Activated T-helper 1 cell treated with anti-CD3 and anti-CD28 coated beads, Interleukin-12 subunit alpha, Interleukin-12 subunit beta, Interleukin-2, Interleukin-4 antibody, amounts not matched to agents 30 ng/mL and 10 ng/mL and 1 ng/mL, durations not matched to agents 14 hours and 24 hours and 36 hours (primary cell): ENCODE measurements at regions of chr4 and their contacts with region 1.

Region 1: DNA sequence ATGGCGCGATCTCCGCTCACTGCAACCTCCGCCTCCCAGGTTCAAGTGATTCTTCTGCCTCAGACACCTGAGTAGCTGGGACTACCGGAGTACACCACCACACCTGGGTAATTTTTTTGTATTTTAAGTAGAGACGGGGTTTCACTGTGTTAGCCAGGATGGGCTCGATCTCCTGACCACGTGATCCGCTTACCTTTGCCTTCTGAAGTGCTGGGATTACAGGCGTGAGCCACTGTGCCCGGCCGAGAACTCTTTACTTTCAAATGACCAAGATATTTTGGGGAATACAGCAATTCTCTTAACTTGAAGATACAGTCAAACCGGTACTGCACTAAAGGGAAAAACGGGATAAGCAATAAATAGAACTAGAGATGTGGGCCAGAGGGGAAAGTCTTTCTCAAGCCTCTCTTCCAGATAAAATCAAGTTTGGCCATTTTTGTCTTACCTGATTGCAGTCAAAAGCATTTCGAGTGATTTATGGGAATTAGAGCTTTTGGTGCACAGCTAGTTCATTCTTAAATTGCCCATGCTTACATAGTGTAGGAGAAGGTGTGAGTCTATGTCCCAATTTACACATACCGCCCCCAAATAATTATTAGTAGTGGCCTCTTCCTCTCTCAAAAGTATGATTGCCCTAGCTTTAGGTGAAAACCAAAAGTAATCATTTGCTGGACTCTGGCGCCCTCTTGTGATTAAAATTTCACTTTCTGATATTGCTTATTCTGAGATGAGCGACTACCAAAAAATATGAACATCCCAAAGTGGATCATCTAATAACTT is 53.2 kb upstream of the ABCG2 start:
- DNase-seq: peak; percentile 34
- H3K4me3 Mint-ChIP-seq: no peak overlapping the region
- H3K27ac Mint-ChIP-seq: no peak overlapping the region
- H3K4me1 Mint-ChIP-seq: no peaks in the 10 kb centered on the region
- H3K27me3 Mint-ChIP-seq: peaks cover 9% of the 10 kb centered on the region

Region 2: GRCh38 chr4:87375719-87376291 is 835.9 kb before region 1 on chr4:
- intact Hi-C with region 1: loop called (anchors 5 kb)
- DNase-seq: no peak
- H3K4me3 Mint-ChIP-seq: no peak overlapping the region
- H3K27ac Mint-ChIP-seq: no peak overlapping the region
- H3K4me1 Mint-ChIP-seq: no peaks in the 10 kb centered on the region
- H3K27me3 Mint-ChIP-seq: no peaks in the 10 kb centered on the region

Region 3: DNA sequence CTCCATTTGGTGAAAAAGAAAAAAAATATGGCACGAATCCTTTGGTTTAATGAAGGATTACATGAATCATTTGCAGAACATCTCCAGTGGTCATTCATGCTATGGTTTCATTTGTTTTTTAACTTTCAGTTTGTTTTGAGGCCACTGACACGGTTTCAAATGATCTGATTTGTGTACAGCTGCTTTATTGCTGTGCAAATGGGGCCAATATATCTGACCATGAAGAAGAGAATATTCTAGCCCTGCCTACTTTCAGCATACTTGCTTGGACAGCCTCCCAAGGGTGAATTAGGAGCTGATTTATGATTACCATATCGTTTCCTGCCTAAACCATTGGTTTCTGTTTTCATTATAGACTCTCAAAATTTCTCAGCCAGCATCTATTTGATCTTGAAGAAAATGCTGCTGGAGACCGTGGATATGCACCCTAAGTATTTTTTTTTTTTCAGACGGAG is 713.2 kb before region 1 on chr4:
- intact Hi-C with region 1: loop called (anchors 5 kb)
- DNase-seq: no peak
- H3K4me3 Mint-ChIP-seq: no peak overlapping the region
- H3K27ac Mint-ChIP-seq: no peak overlapping the region
- H3K4me1 Mint-ChIP-seq: peaks cover 5% of the 10 kb centered on the region
- H3K27me3 Mint-ChIP-seq: no peaks in the 10 kb centered on the region

Region 4: DNA sequence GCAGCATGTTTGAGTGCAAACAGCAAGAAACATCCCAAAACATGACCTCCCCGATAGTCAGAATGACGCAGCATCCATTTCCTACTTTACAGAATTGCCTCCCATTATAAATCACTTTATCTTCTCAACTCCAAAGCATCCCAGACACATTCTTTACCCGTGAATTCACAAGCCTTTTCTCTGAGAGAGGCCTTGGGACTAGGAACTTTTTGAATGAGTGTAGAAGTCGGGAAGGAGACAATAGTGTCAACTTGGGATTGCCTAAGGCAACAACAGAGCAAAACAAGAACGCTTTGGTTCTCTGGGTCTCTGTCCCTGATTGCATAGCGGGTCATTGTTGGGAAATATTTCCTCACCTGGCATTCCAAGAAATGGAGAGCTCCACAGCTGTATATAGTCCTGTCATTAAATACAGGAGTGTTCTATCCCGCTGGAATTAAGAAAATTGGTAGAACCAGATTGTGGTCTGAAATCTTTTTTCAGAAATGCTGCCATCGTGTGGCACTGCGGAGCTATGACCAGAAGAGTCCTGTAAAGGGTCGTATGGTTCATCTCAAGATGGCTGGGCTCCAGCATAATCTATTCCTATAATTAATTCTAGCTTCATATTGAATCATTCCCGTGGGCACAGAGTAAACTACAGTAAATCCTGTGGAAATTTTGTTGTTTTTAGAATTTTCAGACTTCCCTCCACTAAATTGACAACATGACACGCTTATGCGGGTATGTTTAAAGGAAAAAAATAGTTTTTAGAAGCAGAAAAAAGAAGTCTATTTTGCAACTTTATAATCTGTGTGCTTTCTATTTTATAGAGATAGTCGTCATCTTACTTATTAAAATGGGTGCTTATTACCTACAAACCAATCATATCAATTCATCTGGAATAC is 238.1 kb before region 1 on chr4:
- intact Hi-C with region 1: loop called (anchors 5 kb)
- DNase-seq: no peak
- H3K4me3 Mint-ChIP-seq: no peak overlapping the region
- H3K27ac Mint-ChIP-seq: no peak overlapping the region
- H3K4me1 Mint-ChIP-seq: peaks cover 15% of the 10 kb centered on the region
- H3K27me3 Mint-ChIP-seq: peaks cover 53% of the 10 kb centered on the region

Region 5: DNA sequence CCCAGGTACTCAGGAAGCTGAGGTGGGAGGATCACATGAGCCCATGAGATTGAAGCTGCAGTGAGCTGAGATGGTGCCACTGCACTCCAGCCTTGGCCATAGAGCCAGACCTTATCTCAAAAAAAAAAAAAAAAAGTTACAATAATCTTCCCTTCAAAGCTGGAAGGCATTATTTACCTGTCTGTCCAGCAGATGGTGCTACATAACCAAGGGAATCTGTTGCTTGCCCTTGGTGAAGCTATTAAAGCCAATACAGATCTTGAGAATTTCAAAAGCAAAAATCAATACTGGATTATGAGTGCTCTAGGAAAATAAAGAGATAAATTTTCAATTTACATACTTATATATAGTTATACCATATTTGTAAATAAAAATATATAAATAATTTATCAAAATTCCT is 178.4 kb before region 1 on chr4:
- intact Hi-C with region 1: loop called (anchors 1 kb)
- DNase-seq: peak; percentile 29
- H3K4me3 Mint-ChIP-seq: no peak overlapping the region
- H3K27ac Mint-ChIP-seq: no peak overlapping the region
- H3K4me1 Mint-ChIP-seq: peaks cover 2% of the 10 kb centered on the region
- H3K27me3 Mint-ChIP-seq: no peaks in the 10 kb centered on the region

Region 6: DNA sequence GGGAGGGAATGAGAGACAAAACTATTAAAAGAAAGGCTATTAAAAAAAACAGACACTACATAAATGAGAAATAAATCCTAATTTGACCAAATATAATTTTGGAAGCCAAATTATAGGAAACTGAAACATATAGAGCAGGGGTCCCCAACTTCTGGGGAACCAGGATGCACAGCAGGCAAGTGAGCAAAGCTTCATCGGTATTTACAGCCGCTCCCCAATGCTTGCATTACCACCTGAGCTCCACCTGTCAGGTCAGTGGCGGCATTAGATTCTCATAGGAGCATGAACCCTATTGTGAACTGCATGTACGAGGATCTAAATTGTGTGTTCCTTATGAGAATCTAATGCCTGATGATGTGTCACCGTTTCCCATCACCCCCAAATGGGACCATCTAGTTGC is 81.7 kb before region 1 on chr4:
- intact Hi-C with region 1: no loop called
- DNase-seq: no peak
- H3K4me3 Mint-ChIP-seq: no peak overlapping the region
- H3K27ac Mint-ChIP-seq: no peak overlapping the region
- H3K4me1 Mint-ChIP-seq: no peaks in the 10 kb centered on the region
- H3K27me3 Mint-ChIP-seq: no peaks in the 10 kb centered on the region

Region 7: DNA sequence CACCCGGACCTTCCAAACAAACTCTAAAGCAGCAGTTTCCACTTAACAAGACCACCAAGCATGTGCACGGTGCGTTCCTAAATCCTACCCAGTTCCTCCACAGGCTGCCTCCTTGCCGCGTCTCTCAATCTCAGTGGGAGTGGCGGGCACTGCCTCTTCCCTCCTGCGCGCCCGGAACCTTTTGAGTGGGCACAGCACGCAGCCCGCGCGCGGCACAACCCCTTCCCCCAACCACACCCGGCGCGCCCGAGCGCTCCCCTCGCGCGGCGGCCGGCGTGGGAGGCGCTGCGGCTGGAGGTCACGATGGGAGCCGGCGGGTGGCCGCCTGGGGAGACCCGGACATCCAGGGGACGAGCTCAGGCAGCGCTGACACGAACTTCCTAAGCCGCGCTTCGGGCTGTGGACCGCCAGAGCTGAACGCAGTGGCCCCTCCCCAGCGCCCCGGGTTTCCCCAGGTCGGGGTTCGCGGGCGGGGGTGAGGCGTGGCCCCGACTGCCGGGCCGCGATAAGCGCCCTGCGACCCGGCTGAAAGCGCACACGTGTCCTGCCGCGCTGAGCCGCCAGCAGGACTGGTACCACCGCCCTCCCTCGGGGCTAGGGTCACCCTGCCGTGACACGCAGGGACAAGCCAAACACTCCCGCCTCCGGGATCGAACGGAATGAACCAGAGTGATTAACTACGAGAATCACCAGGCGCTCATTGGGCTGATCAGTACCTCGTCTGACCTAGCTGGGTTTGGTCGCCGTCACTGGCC is 53.0 kb before region 1 on chr4 and contains the start of gene ABCG2:
- intact Hi-C with region 1: loop called (anchors 5 kb)
- DNase-seq: peak; percentile 46
- H3K4me3 Mint-ChIP-seq: peak within 1 kb of the TSS; percentile 80
- H3K27ac Mint-ChIP-seq: peak within 1 kb of the TSS; percentile 16
- H3K4me1 Mint-ChIP-seq: peaks cover 17% of the 10 kb centered on the region
- H3K27me3 Mint-ChIP-seq: peaks cover 18% of the 10 kb centered on the region
- total RNA-seq, gene ABCG2: 0.34 TPM in 2 replicates

Region 8: GRCh38 chr4:89077761-89078160 is 866.1 kb after region 1 on chr4:
- intact Hi-C with region 1: no loop called
- DNase-seq: no peak
- H3K4me3 Mint-ChIP-seq: no peak overlapping the region
- H3K27ac Mint-ChIP-seq: no peak overlapping the region
- H3K4me1 Mint-ChIP-seq: peaks cover 6% of the 10 kb centered on the region
- H3K27me3 Mint-ChIP-seq: no peaks in the 10 kb centered on the region